Right ventricle myocardium inferior (tissue), 1 donor: ENCODE measurements at regions of chr18 and their contacts with region 1.

Region 1: GRCh38 chr18:44130376-44130942 is 550.2 kb upstream of the SETBP1 start:
- DNase-seq: no peak
- ATAC-seq: no peak

Region 2: DNA sequence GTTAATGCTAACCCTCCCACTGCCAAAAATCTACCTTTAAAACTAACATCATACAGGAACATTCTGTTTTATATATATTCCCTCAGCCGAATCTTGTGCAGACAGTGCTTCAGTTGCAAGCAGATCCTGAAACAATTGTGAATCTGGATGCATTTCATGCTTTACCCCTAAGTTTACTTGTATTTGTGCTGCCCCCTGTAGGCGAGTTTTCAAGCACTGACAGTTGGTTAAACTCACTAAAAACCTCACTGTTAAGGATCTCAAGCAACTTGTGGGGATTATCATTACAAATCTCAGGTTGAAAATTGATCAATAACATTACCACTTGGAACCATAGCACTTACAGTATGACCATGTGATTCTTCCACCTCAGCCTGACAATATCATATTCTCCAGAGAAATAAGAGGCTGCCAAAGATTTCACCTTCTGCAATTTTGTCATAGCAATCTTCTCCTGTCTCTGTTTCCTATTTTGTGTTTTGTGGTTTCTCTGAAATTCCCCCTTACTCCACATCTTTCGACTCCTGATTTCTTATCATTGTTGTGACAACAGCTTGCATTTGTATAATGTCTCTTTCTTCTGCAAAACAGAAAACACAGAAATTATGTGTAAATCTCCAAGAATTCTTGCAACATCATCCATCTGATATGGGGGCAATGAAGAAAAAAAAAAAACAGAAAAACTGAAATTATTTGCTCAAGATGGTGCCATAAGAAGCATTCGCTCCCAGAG is 195.6 kb after region 1 on chr18:
- intact Hi-C with region 1: loop called (anchors 5 kb)
- DNase-seq: no peak
- ATAC-seq: no peak